ENCODE measurements at regions of chr19 and their contacts with region 1.

Region 1: GRCh38 chr19:17499648-17500431 is 11.6 kb upstream of the PGLS start:
- DNase-seq: no peak
- ATAC-seq: no peak
- H3K4me3 ChIP-seq: no peak overlapping the region
- H3K27ac ChIP-seq: no peak overlapping the region
- H3K4me1 ChIP-seq: no peaks in the 10 kb centered on the region
- H3K27me3 ChIP-seq: no peaks in the 10 kb centered on the region
- CTCF ChIP-seq: no peak

Region 2: GRCh38 chr19:17475541-17476115 is 24.2 kb before region 1 on chr19:
- CTCF ChIA-PET with region 1: interaction called, 12 read pairs
- POLR2A ChIA-PET with region 1: no interaction called
- in situ Hi-C with region 1: no loop called
- intact Hi-C with region 1: no loop called
- DNase-seq: no peak
- ATAC-seq: peak; percentile 72
- H3K4me3 ChIP-seq: no peak overlapping the region
- H3K27ac ChIP-seq: peak overlapping the region; percentile 44; the same call in 1 of the 2 replicates
- H3K4me1 ChIP-seq: peaks cover 7% of the 10 kb centered on the region
- H3K27me3 ChIP-seq: no peaks in the 10 kb centered on the region
- CTCF ChIP-seq: no peak

Measured in Panc1 (cell line).